ENCODE measurements at regions of chr1 and their contacts with region 1.

Region 1: GRCh38 chr1:20615946-20616846 is 17.1 kb upstream of the PINK1 start:
- DNase-seq: no peak
- ATAC-seq: no peak
- H3K4me3 ChIP-seq: no peak overlapping the region
- H3K27ac ChIP-seq: no peak overlapping the region
- H3K4me1 ChIP-seq: peaks cover 33% of the 10 kb centered on the region
- H3K27me3 ChIP-seq: no peaks in the 10 kb centered on the region
- CTCF ChIP-seq: no peak

Region 2: GRCh38 chr1:20633190-20634064 is 17.2 kb after region 1 on chr1 and contains the start of gene PINK1:
- CTCF ChIA-PET with region 1: interaction called, 4 read pairs
- POLR2A ChIA-PET with region 1: interaction called, 12 read pairs
- intact Hi-C with region 1: loop called (anchors 2 kb)
- DNase-seq: peak; percentile 81
- ATAC-seq: peak; percentile 89
- H3K4me3 ChIP-seq: peak within 1 kb of the TSS; percentile 74
- H3K27ac ChIP-seq: peak within 1 kb of the TSS; percentile 62
- H3K4me1 ChIP-seq: peaks cover 18% of the 10 kb centered on the region
- H3K27me3 ChIP-seq: no peaks in the 10 kb centered on the region
- CTCF ChIP-seq: peak; percentile 94
- total RNA-seq, gene PINK1: 129 and 160 TPM in 2 replicates

Measured in PC-3 (cell line).